IMR-90 (cell line): ENCODE measurements at regions of chr11 and their contacts with region 1.

Region 1: DNA sequence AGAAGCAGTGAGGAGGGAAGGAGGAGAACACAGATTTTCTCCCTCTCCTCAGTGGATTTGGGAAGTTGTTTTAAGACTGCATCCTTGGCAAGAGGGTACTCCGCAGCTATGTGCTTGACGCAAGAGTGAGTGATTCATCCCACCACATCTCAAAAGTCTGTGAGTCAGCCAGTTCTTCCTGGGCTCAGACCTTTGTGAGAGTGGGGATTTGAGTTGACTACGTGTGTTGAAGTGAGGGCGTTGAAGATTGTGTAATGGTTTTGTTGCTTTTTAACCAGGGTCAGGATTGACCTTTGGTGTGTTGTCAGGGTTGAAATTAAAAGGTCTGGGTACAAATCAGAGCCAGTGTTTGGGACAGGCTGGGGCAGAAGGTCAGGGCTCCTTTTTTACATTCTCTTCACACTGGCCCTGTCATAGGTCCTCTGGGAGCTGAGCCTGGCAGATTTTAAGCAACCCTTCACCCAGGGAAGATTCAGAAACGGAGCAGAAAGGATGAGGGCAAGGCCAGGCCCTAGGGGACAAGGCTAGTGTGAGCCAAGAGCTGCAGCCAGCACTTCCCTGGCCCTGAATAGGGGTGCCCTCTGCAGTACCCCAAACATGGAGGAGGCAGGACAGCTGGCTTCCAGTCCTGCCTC is 4.2 kb upstream of the C11orf86 start:
- DNase-seq: peak; percentile 100
- ATAC-seq: peak; percentile 80
- H3K4me3 ChIP-seq: no peak overlapping the region
- H3K27ac ChIP-seq: peak overlapping the region; percentile 97
- H3K4me1 ChIP-seq: peaks cover 32% of the 10 kb centered on the region
- H3K27me3 ChIP-seq: no peaks in the 10 kb centered on the region
- CTCF ChIP-seq: no peak
- POLR2A ChIP-seq: peak; percentile 72
- RAD21 ChIP-seq: peak; percentile 7; the same call in 1 of the 2 replicates

Region 2: DNA sequence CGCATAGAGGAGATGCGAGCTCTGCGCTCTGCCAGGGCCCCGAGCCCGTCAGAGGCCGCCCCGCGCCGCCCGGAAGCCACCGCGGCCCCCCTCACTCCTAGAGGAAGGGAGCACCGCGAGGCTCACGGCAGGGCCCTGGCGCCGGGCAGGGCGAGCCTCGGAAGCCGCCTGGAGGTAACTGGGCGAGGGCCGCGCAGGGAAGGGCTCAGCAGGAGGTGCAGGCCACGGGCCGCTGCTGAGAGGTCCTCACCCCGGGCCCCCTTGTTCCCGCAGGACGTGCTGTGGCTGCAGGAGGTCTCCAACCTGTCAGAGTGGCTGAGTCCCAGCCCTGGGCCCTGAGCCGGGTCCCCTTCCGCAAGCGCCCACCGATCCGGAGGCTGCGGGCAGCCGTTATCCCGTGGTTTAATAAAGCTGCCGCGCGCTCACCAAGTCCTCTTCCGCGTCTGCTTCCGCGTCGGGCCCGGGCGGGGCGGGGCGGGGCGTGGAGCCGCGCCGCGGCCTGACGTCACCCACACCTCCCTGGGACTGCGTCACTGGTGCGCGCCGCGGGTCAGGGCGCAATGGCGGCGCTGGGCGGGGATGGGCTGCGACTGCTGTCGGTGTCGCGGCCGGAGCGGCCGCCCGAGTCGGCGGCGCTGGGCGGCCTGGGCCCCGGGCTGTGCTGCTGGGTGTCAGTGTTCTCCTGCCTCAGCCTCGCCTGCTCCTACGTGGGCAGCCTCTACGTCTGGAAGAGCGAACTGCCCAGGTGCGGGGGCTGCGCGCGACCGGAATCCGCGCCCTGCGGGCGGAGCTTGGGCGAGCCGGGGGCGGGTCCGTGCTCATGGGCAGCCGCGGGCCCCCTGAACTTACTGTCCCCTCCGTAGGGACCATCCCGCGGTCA is 127.8 kb before region 1 on chr11 and contains the start of gene RCE1:
- CTCF ChIA-PET with region 1: interaction called, 3 read pairs
- POLR2A ChIA-PET with region 1: no interaction called
- dilution Hi-C with region 1: no loop called
- in situ Hi-C with region 1: no loop called
- intact Hi-C with region 1: loop called (anchors 5 kb)
- DNase-seq: peak; percentile 85
- ATAC-seq: peak; percentile 90
- H3K4me3 ChIP-seq: peak within 1 kb of the TSS; percentile 81
- H3K27ac ChIP-seq: peak within 1 kb of the TSS; percentile 97
- H3K4me1 ChIP-seq: peaks cover 6% of the 10 kb centered on the region
- H3K27me3 ChIP-seq: no peaks in the 10 kb centered on the region
- CTCF ChIP-seq: no peak
- POLR2A ChIP-seq: peak; percentile 94
- RAD21 ChIP-seq: no peak
- total RNA-seq, gene RCE1: 5.6 and 6.6 TPM in 2 replicates

Region 3: GRCh38 chr11:66855574-66856495 is 115.1 kb before region 1 on chr11:
- CTCF ChIA-PET with region 1: no interaction called
- POLR2A ChIA-PET with region 1: no interaction called
- dilution Hi-C with region 1: no loop called
- in situ Hi-C with region 1: no loop called
- intact Hi-C with region 1: loop called (anchors 5 kb)
- DNase-seq: peak; percentile 84
- ATAC-seq: peak; percentile 95
- H3K4me3 ChIP-seq: peak overlapping the region; percentile 57
- H3K27ac ChIP-seq: peak overlapping the region; percentile 78
- H3K4me1 ChIP-seq: peaks cover 4% of the 10 kb centered on the region
- H3K27me3 ChIP-seq: no peaks in the 10 kb centered on the region
- CTCF ChIP-seq: 0 out of 2 replicates have a peak, but pooled peaks have one; percentile 4
- POLR2A ChIP-seq: peak; percentile 78
- RAD21 ChIP-seq: no peak